ENCODE measurements at regions of chr6 and their contacts with region 1.

Region 1: GRCh38 chr6:130885392-130886192 is 58.4 kb downstream of the SMLR1 start:
- H3K4me3 ChIP-seq: no peak overlapping the region
- H3K27ac ChIP-seq: no peak overlapping the region
- H3K4me1 ChIP-seq: no peaks in the 10 kb centered on the region
- CTCF ChIP-seq: peak; percentile 72

Region 2: GRCh38 chr6:130803804-130804203 is 81.8 kb before region 1 on chr6:
- CTCF ChIA-PET with region 1: no interaction called
- POLR2A ChIA-PET with region 1: no interaction called
- H3K4me3 ChIP-seq: no peak overlapping the region
- H3K27ac ChIP-seq: no peak overlapping the region
- H3K4me1 ChIP-seq: no peaks in the 10 kb centered on the region
- CTCF ChIP-seq: no peak

Region 3: GRCh38 chr6:130872250-130873095 is 13.1 kb before region 1 on chr6:
- CTCF ChIA-PET with region 1: interaction called, 55 read pairs
- POLR2A ChIA-PET with region 1: no interaction called
- H3K4me3 ChIP-seq: no peak overlapping the region
- H3K27ac ChIP-seq: no peak overlapping the region
- H3K4me1 ChIP-seq: no peaks in the 10 kb centered on the region
- CTCF ChIP-seq: peak; percentile 50

Region 4: DNA sequence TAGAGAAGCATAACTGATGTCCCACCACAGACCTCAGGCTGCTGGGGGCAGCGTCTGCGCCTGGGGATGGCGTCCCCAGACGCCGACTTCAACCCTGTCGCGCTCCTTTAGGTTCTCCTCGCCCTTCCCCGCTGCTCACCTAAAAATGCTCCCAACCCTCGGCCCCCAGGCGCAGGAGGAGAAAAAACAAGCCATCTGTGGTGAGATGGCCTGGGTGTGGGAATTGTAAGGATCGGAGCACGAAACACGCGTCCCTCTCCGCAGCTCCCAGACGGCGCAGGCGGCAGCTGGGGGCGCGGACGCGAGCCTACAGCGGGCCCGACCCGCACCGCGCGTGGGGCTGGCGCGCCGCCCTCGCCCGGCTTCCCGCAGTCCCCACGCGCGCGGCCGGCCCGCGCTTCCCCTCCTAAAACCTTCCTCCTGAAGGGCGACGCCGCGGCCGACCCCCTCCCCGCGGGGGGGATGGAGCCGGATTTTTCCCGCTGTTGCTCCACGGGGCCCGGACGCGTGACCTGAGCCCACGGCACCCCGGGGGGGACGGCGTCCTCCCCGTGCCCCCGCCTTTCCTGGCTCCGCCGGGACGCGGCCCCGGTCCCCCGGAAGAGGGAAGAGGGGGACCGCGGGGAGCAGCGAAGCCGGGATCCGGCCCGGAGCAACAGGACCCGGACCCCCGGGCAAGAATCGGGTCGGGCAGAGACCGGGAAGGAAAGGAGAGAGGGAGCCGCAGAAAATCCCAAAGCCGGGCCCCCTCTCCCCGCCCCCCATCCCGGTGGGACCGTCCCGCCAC is 176.8 kb after region 1 on chr6:
- CTCF ChIA-PET with region 1: interaction called, 15 read pairs
- POLR2A ChIA-PET with region 1: interaction called, 4 read pairs
- H3K4me3 ChIP-seq: peak overlapping the region; percentile 62
- H3K27ac ChIP-seq: peak overlapping the region; percentile 87
- H3K4me1 ChIP-seq: peaks cover 12% of the 10 kb centered on the region
- CTCF ChIP-seq: no peak

Region 5: GRCh38 chr6:131129689-131130545 is 244.3 kb after region 1 on chr6:
- CTCF ChIA-PET with region 1: interaction called, 12 read pairs
- POLR2A ChIA-PET with region 1: no interaction called
- H3K4me3 ChIP-seq: no peak overlapping the region
- H3K27ac ChIP-seq: no peak overlapping the region
- H3K4me1 ChIP-seq: no peaks in the 10 kb centered on the region; the same call in 1 of the 2 replicates
- CTCF ChIP-seq: no peak

Region 6: GRCh38 chr6:131532580-131533039 is 647.0 kb after region 1 on chr6:
- CTCF ChIA-PET with region 1: interaction called, 36 read pairs
- POLR2A ChIA-PET with region 1: no interaction called
- H3K4me3 ChIP-seq: no peak overlapping the region
- H3K27ac ChIP-seq: no peak overlapping the region
- H3K4me1 ChIP-seq: no peaks in the 10 kb centered on the region
- CTCF ChIP-seq: no peak

Measured in HEK293 (cell line).